ENCODE measurements at regions of chr10 and their contacts with region 1.

Region 1: DNA sequence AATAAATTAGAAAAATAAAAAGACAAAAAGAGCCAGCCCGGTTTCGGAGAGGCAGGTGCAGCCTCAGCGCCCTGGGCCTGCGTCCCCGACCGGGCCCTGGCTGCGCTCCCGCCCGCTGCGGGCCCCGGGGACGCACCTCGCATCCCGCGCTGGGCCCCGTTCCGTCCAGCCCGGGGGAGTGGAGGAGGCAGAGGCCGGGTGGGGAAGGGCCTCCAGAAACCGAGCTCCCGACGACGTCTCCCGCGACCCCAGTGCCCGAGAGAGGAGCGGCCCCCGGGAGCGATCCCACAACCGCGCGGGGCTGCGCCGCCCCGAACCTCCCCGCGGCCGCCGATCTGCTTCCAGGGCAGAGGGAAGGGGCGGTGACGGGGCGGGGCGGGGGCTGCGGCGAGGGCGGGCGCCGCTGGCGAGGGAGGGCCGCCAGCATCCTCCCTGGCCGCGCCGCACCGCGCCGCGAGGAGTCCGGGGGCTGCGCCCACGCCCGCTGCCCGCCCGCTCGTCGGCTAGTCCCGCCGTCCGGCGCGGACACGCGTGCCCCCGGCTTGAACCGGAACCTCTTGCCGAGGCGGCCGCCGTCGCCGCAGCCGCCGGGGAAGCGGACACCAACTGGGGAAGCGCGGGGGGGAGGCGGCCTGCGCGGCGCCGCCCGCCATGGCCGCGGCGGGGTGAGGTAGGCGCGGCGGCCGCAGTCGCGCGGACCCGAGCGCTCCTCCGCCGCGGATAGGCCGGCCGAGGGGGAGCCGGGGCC is at the start of gene CCNY:
- DNase-seq: peak; percentile 65 to 81 (median 77)
- ATAC-seq: peak; percentile 91
- H3K4me3 ChIP-seq: peak within 1 kb of the TSS; percentile 82
- H3K4me3 Mint-ChIP-seq: peak within 1 kb of the TSS; percentile 85 to 96 (median 90)
- H3K27ac ChIP-seq: peak within 1 kb of the TSS; percentile 92
- H3K27ac Mint-ChIP-seq: peak within 1 kb of the TSS; percentile 81 to 94 (median 90)
- H3K4me1 ChIP-seq: peaks cover 35 to 39% of the 10 kb centered on the region in 2 donors
- H3K4me1 Mint-ChIP-seq: peaks cover 58 to 81% (median 76%) of the 10 kb centered on the region in 7 donors
- H3K27me3 ChIP-seq: no peaks in the 10 kb centered on the region
- H3K27me3 Mint-ChIP-seq: no peaks in the 10 kb centered on the region
- total RNA-seq, gene CCNY: 52.3 to 91.9 (median 68.3) TPM

Region 2: DNA sequence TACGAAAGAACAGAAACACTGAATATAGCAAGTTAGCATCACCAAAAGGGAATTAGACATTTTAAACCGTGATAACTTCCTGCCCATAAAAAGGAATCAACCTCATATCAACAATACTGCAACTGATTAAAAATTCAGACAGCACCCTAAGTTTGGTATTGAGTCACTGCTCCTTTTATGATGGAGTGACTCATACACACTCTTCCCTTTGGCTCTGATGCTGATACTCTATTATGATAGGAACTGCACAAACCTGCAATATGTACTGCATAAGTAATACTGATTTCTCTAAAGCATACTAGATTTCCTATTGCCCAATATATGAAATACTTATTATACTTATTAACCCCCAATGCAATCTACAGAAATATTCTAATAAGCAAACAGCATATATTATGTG is 639.8 kb before region 1 on chr10:
- CTCF ChIA-PET with region 1: no interaction called
- POLR2A ChIA-PET with region 1: no interaction called
- intact Hi-C with region 1: no loop called
- DNase-seq: no peak
- ATAC-seq: no peak
- H3K4me3 ChIP-seq: no peak overlapping the region
- H3K4me3 Mint-ChIP-seq: no peak overlapping the region
- H3K27ac ChIP-seq: no peak overlapping the region
- H3K27ac Mint-ChIP-seq: no peak overlapping the region
- H3K4me1 ChIP-seq: no peaks in the 10 kb centered on the region
- H3K4me1 Mint-ChIP-seq: peaks cover 0 to 10% (median 0%) of the 10 kb centered on the region in 7 donors
- H3K27me3 ChIP-seq: no peaks in the 10 kb centered on the region
- H3K27me3 Mint-ChIP-seq: peaks cover 0 to 12% (median 6%) of the 10 kb centered on the region in 5 donors

Region 3: GRCh38 chr10:35090162-35090954 is 245.9 kb before region 1 on chr10 and contains the start of gene CUL2:
- CTCF ChIA-PET with region 1: no interaction called
- POLR2A ChIA-PET with region 1: no interaction called
- intact Hi-C with region 1: loop called (anchors 2 to 10 kb)
- DNase-seq: peak; percentile 85 to 98 (median 94)
- ATAC-seq: peak; percentile 96
- H3K4me3 ChIP-seq: peak within 1 kb of the TSS; percentile 65
- H3K4me3 Mint-ChIP-seq: peak within 1 kb of the TSS; percentile 84 to 99 (median 94)
- H3K27ac ChIP-seq: peak within 1 kb of the TSS; percentile 98
- H3K27ac Mint-ChIP-seq: peak within 1 kb of the TSS; percentile 91 to 99 (median 97)
- H3K4me1 ChIP-seq: peaks cover 35 to 41% of the 10 kb centered on the region in 2 donors
- H3K4me1 Mint-ChIP-seq: peaks cover 31 to 55% (median 52%) of the 10 kb centered on the region in 7 donors
- H3K27me3 ChIP-seq: no peaks in the 10 kb centered on the region
- H3K27me3 Mint-ChIP-seq: peaks cover 0 to 8% (median 0%) of the 10 kb centered on the region in 5 donors
- total RNA-seq, gene CUL2: 30.9 to 43.7 (median 36.0) TPM

Region 4: GRCh38 chr10:35218339-35218955 is 117.8 kb before region 1 on chr10:
- CTCF ChIA-PET with region 1: no interaction called
- POLR2A ChIA-PET with region 1: no interaction called
- intact Hi-C with region 1: loop called (anchors 5 kb)
- DNase-seq: peak; percentile 58 to 83 (median 76)
- ATAC-seq: peak; percentile 94
- H3K4me3 ChIP-seq: no peak overlapping the region
- H3K4me3 Mint-ChIP-seq: peak overlapping the region in 8 of 10 donors; percentile 33 to 79 (median 62)
- H3K27ac ChIP-seq: no peak overlapping the region
- H3K27ac Mint-ChIP-seq: peak overlapping the region; percentile 16 to 96 (median 77)
- H3K4me1 ChIP-seq: no peaks in the 10 kb centered on the region
- H3K4me1 Mint-ChIP-seq: peaks cover 5 to 47% (median 10%) of the 10 kb centered on the region in 7 donors
- H3K27me3 ChIP-seq: no peaks in the 10 kb centered on the region
- H3K27me3 Mint-ChIP-seq: no peaks in the 10 kb centered on the region

Region 5: DNA sequence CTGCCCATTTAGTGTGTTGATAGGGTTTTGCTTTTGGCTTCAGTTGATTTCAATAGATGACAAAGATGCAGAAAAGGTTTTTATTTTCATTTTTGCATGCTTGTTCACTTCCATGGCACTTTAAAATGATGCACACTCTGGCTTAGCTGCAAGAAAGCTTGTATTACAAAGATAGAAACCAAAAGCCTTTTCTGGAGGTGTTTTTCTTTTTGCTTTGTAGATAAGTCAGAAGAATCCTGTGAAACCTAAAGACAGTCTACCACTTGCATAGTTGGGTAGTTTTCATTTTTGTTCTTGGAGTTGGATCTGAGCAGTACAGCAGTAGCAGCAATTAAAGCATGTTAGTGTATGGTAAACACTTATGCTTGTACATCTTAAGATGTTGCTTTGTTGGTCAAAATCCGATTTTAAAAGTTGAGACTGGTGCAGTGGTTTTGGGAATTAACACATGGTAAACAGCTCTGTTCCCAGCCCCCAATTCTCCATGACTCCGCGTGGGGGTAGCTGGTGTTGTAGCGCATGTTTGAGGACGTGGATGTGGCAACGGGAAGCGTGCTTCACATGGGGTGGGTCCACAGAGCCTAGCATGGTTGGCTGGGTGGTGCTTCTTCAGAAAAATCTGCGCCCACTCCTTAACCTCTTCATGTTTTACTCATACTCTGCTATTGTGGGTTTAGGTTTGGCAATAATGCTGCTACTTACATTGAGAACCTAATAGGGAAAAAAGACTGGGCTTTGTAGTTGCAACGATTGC is 19.9 kb after region 1 on chr10:
- CTCF ChIA-PET with region 1: no interaction called
- POLR2A ChIA-PET with region 1: interaction called, 5 read pairs
- intact Hi-C with region 1: loop called (anchors 1 to 2 kb)
- DNase-seq: peak in 2 of 9 donors; percentile 13 to 40
- ATAC-seq: peak; percentile 40
- H3K4me3 ChIP-seq: no peak overlapping the region
- H3K4me3 Mint-ChIP-seq: peak overlapping the region; percentile 29 to 78 (median 58)
- H3K27ac ChIP-seq: no peak overlapping the region
- H3K27ac Mint-ChIP-seq: peak overlapping the region in 8 of 9 donors; percentile 3 to 89 (median 52)
- H3K4me1 ChIP-seq: peaks cover 20 to 31% of the 10 kb centered on the region in 2 donors
- H3K4me1 Mint-ChIP-seq: peaks cover 62 to 91% (median 88%) of the 10 kb centered on the region in 7 donors
- H3K27me3 ChIP-seq: no peaks in the 10 kb centered on the region
- H3K27me3 Mint-ChIP-seq: no peaks in the 10 kb centered on the region

Region 6: GRCh38 chr10:35447693-35448407 is 111.6 kb after region 1 on chr10:
- CTCF ChIA-PET with region 1: no interaction called
- POLR2A ChIA-PET with region 1: no interaction called
- intact Hi-C with region 1: loop called (anchors 5 kb)
- DNase-seq: peak in 7 of 9 donors; percentile 57 to 80 (median 73)
- ATAC-seq: peak; percentile 78
- H3K4me3 ChIP-seq: peak overlapping the region; percentile 38
- H3K4me3 Mint-ChIP-seq: peak overlapping the region; percentile 73 to 89 (median 82)
- H3K27ac ChIP-seq: peak overlapping the region; percentile 65
- H3K27ac Mint-ChIP-seq: peak overlapping the region; percentile 91 to 99 (median 97)
- H3K4me1 ChIP-seq: peaks cover 30 to 62% of the 10 kb centered on the region in 2 donors
- H3K4me1 Mint-ChIP-seq: peaks cover 56 to 83% (median 80%) of the 10 kb centered on the region in 7 donors
- H3K27me3 ChIP-seq: no peaks in the 10 kb centered on the region
- H3K27me3 Mint-ChIP-seq: no peaks in the 10 kb centered on the region

Region 7: GRCh38 chr10:35642027-35642792 is 306.0 kb after region 1 on chr10 and contains the start of gene FZD8:
- CTCF ChIA-PET with region 1: no interaction called
- POLR2A ChIA-PET with region 1: no interaction called
- intact Hi-C with region 1: loop called (anchors 2 to 5 kb)
- DNase-seq: peak; percentile 35 to 77 (median 58)
- ATAC-seq: peak; percentile 87
- H3K4me3 ChIP-seq: peak within 1 kb of the TSS; percentile 80
- H3K4me3 Mint-ChIP-seq: peak within 1 kb of the TSS; percentile 81 to 94 (median 88)
- H3K27ac ChIP-seq: no peak within 1 kb of the TSS
- H3K27ac Mint-ChIP-seq: peak within 1 kb of the TSS in 5 of 9 donors; percentile 4 to 49 (median 42)
- H3K4me1 ChIP-seq: peaks cover 4 to 5% of the 10 kb centered on the region in 2 donors
- H3K4me1 Mint-ChIP-seq: peaks cover 9 to 42% (median 22%) of the 10 kb centered on the region in 7 donors
- H3K27me3 ChIP-seq: peaks cover 3 to 9% of the 10 kb centered on the region in 2 donors
- H3K27me3 Mint-ChIP-seq: peaks cover 7 to 79% (median 26%) of the 10 kb centered on the region in 5 donors
- total RNA-seq, gene FZD8: 0.19 to 1.7 (median 0.47) TPM